Cardiac septum (tissue), 1 donor: ENCODE measurements at regions of chr12 and their contacts with region 1.

Region 1: DNA sequence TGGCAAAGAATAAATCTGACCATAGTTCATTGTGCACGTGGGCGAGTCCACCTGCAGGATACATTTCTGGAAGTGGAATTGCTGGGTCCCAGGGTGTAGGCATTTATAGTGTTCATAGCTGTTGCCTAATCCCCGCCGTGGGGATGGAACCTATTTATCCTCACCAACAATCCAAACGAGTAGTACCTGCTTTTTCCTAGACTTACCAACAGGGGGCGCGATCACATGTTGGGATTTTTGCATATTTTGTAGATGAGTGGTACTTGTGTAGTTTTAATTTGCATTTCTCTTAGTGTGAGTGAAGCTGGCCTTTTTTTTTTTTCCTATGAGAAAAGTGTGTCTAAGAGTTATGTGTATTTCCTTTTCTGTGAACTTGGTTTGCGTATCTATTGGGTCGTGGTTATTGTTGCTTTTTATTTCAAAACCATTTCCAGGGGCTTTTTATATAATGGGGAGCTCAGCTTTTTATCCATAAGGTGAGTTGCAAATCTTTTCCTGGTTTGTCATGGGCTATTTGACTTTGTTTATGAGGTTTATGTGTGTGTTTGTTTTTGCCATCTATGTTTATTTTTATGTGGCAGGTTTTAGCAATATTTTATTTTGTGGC is 67.2 kb downstream of the CCDC92 start:
- DNase-seq: peak; percentile 74

Region 2: GRCh38 chr12:123645878-123646277 is 259.5 kb before region 1 on chr12:
- intact Hi-C with region 1: no loop called
- DNase-seq: no peak

Region 3: DNA sequence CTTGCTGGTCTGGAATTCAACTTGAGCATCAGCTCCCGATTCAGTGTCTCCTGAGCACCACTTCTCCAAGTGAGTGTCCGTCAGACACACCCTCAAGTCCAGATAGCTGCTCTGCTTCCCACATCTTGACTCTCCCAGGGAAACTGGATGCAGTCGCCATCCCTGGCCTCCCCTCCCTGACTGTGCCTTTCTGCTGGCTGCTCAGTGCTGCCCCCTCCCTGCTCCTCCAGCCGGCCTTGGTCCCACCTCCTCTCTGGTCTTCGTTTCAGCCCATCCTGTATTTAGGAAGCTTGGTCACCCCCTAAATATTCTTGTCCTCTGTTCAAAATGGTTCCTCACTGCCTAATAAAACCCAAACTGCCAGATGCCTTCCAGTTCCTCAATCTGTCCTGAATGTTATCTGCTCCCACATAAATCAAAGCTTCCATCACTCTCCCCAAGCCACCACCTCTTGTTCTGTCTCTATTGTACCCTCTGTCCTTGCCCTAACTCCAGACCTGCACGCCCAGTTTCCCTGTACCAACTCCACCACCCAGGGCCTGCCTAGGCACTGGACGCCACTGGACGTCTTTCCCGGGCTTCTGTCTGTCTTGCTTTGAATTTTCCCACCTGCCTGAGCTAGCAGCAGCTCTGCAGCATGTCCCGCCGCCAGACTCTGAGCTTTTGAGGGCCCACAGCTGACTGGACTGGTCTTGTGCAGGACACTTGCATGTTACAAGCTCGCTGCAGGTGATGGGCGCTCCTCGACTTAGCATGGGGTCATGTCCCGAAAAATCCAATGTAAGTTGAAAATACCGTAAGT is 33.5 kb after region 1 on chr12:
- intact Hi-C with region 1: no loop called
- DNase-seq: peak; percentile 35

Region 4: GRCh38 chr12:123995023-123995748 is 89.8 kb after region 1 on chr12:
- intact Hi-C with region 1: no loop called
- DNase-seq: no peak

Region 5: GRCh38 chr12:124026755-124027745 is 121.6 kb after region 1 on chr12:
- intact Hi-C with region 1: loop called (anchors 10 kb)
- DNase-seq: no peak